AG04449 (cell line): ENCODE measurements at regions of chr3 and their contacts with region 1.

Region 1: DNA sequence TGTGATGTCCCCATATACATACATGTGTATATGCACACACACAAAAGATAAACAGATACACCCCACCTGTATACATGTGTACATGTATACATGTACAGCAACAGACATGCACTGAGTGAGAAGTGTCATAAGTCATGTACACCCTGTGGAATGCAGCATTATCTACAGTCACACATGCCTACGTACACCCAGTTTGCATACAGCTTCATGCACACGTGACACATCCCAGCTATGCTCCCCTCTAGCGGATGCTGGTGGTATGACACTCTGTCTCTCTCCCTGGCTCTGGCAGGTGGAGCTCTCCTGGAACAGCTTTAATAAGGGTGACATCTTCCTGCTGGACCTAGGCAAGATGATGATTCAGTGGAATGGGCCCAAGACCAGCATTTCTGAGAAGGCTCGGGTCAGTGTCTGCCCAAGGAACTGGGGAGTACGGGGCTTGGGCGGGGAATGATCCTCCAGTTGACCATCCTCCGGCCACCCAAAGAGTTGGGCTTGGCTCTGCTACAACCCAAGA is 6.3 kb downstream of the VILL start:
- DNase-seq: no peak
- H3K4me3 ChIP-seq: no peak overlapping the region
- CTCF ChIP-seq: peak; percentile 90

Region 2: GRCh38 chr3:37979541-37980461 is 17.0 kb before region 1 on chr3:
- CTCF ChIA-PET with region 1: interaction called, 40 read pairs
- POLR2A ChIA-PET with region 1: no interaction called
- DNase-seq: no peak
- H3K4me3 ChIP-seq: no peak overlapping the region
- CTCF ChIP-seq: no peak

Region 3: GRCh38 chr3:38011111-38011510 is 14.3 kb after region 1 on chr3:
- CTCF ChIA-PET with region 1: interaction called, 15 read pairs
- POLR2A ChIA-PET with region 1: no interaction called
- DNase-seq: no peak
- H3K4me3 ChIP-seq: no peak overlapping the region
- CTCF ChIP-seq: no peak